ENCODE measurements at regions of chr2 and their contacts with region 1.

Region 1: DNA sequence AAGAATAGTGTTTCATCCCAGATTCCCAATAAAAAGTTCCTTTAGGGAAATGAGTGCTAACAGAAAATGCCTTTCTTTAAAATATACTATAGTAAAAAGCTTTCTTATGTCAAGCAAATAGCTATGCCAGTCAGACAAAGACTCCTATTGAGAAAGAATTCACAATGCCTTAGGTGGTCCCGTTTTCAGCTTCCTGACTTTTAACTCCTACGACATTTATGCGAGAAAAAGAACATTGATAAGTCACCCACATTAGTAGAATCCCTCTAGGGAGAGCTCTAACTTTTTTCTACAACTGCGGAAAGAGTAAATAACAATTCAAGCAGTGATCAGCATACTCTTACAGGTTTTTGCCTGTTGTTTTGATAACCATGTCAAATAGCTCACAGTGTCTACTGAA is 750.8 kb upstream of the ACVR2A start:
- DNase-seq: no peak
- ATAC-seq: no peak
- H3K4me3 ChIP-seq: no peak overlapping the region
- H3K4me3 Mint-ChIP-seq: no peak overlapping the region
- H3K27ac ChIP-seq: no peak overlapping the region
- H3K27ac Mint-ChIP-seq: no peak overlapping the region
- H3K4me1 ChIP-seq: no peaks in the 10 kb centered on the region
- H3K4me1 Mint-ChIP-seq: no peaks in the 10 kb centered on the region
- H3K27me3 ChIP-seq: no peaks in the 10 kb centered on the region
- H3K27me3 Mint-ChIP-seq: peaks cover 0 to 6% (median 4%) of the 10 kb centered on the region in 5 donors

Region 2: GRCh38 chr2:148586522-148587128 is 1492.5 kb after region 1 on chr2:
- CTCF ChIA-PET with region 1: no interaction called
- POLR2A ChIA-PET with region 1: no interaction called
- intact Hi-C with region 1: loop called in 1 of 2 experiments (anchors 5 kb)
- DNase-seq: no peak
- ATAC-seq: no peak
- H3K4me3 ChIP-seq: no peak overlapping the region
- H3K4me3 Mint-ChIP-seq: no peak overlapping the region
- H3K27ac ChIP-seq: no peak overlapping the region
- H3K27ac Mint-ChIP-seq: no peak overlapping the region
- H3K4me1 ChIP-seq: no peaks in the 10 kb centered on the region
- H3K4me1 Mint-ChIP-seq: peaks cover 0 to 7% (median 5%) of the 10 kb centered on the region in 7 donors
- H3K27me3 ChIP-seq: no peaks in the 10 kb centered on the region
- H3K27me3 Mint-ChIP-seq: peaks cover 0 to 7% (median 0%) of the 10 kb centered on the region in 5 donors